ENCODE measurements at regions of chr3 and their contacts with region 1.

Region 1: DNA sequence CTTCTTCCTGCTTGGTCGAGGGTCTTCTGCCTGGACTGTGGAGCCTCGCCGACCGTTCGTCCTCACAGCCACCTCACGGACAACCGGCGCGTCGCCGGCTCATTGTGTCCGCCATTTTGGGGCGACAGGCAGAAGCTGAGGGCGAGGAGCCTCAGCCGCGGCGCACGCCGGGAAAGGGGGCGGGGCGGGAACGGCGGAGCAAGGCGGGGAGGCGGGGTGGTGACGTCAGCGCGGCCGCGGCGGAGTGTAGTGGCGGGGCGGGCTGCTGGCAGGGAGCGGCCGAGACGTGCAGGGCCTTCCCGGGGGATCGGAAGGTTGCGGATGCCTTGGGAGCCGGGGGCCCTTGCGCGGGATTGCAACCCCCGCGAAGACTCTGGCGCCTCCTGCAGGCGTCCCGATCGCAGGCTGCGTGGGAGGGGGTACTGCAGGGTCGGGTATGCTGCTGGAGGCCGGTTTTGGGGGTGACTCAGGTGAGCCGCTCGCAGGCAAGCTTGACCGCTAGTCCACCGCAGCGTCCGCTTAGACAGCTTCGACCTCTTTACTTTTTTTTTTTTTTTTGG is at the start of gene WDR82:
- DNase-seq: peak; percentile 98
- H3K4me3 Mint-ChIP-seq: peak within 1 kb of the TSS; percentile 96
- H3K27ac Mint-ChIP-seq: peak within 1 kb of the TSS; percentile 98
- H3K4me1 Mint-ChIP-seq: peaks cover 61% of the 10 kb centered on the region
- H3K27me3 Mint-ChIP-seq: no peaks in the 10 kb centered on the region
- total RNA-seq, gene WDR82: 131 TPM

Region 2: GRCh38 chr3:52231502-52232293 is 46.9 kb before region 1 on chr3:
- CTCF ChIA-PET with region 1: interaction called, 29 read pairs
- POLR2A ChIA-PET with region 1: interaction called, 1,001 read pairs
- DNase-seq: peak; percentile 87
- H3K4me3 Mint-ChIP-seq: no peak overlapping the region
- H3K27ac Mint-ChIP-seq: peak overlapping the region; percentile 63
- H3K4me1 Mint-ChIP-seq: peaks cover 45% of the 10 kb centered on the region
- H3K27me3 Mint-ChIP-seq: no peaks in the 10 kb centered on the region

Region 3: DNA sequence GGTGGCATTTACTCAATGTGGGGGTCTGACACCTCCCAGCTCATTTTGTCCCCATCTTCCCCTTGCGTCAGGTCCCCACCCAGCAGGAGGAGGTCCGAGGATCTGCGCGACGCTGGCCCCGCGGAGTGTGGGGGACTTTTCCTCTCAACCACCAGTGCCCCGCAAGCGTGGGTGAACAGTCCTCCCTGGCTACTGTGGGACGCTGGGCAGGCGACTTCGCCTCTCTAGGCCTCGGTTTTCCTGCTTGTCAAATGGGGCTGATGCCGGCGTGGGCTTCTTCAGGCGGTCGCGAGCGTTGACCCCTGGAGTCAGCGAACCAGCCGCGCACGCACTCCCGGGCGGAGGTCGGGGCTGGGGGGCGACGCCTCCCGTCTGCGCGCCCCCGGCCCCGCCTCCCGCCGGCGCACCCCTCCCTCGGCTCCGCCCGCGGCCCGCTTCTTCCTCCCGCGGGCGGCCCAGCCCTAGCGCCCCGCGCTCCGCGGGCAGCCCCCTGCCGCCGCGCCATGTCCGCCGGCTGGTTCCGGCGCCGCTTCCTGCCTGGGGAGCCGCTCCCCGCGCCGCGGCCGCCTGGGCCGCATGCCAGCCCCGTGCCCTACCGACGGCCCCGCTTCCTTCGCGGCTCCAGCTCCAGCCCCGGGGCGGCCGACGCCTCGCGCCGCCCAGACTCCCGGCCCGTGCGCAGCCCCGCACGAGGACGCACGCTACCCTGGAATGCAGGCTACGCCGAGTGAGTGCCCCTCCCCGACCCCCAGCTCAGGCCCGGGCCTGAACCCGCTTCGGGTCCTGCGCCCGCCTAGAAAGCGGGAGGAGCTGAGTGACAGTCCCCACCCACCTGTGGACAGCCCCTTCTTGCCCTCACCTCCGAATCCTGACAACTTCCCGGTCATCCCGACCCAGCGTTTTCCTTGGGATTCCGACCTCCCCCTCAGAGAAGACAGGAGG is 33.0 kb before region 1 on chr3 and contains the start of gene PPM1M:
- CTCF ChIA-PET with region 1: interaction called, 59 read pairs
- POLR2A ChIA-PET with region 1: interaction called, 1,001 read pairs
- DNase-seq: peak; percentile 69
- H3K4me3 Mint-ChIP-seq: peak within 1 kb of the TSS; percentile 89
- H3K27ac Mint-ChIP-seq: peak within 1 kb of the TSS; percentile 91
- H3K4me1 Mint-ChIP-seq: peaks cover 76% of the 10 kb centered on the region
- H3K27me3 Mint-ChIP-seq: no peaks in the 10 kb centered on the region
- total RNA-seq, gene PPM1M: 123 to 124 TPM

Region 4: DNA sequence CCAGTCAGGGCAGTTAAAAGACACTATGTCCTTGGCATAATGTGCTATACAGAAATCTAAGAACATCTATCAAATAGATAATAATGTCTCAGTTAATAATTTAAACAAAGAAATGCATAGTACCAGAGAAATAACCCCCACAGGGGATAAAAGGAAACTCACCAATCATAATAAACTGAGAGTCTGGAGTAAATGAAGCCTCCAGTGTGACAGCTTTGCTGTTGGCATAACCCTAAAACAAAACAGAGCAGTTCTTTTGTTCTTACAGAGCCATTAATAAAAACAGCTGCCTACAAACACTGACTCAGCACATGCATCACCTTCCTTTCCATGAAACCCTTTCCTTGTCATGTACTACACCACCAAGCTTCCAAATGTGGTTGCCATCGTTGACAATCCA is 19.6 kb before region 1 on chr3:
- CTCF ChIA-PET with region 1: interaction called, 53 read pairs
- POLR2A ChIA-PET with region 1: interaction called, 1,001 read pairs
- DNase-seq: no peak
- H3K4me3 Mint-ChIP-seq: no peak overlapping the region
- H3K27ac Mint-ChIP-seq: peak overlapping the region; percentile 62
- H3K4me1 Mint-ChIP-seq: peaks cover 95% of the 10 kb centered on the region
- H3K27me3 Mint-ChIP-seq: no peaks in the 10 kb centered on the region

Region 5: GRCh38 chr3:52302426-52303145 is 24.0 kb after region 1 on chr3:
- CTCF ChIA-PET with region 1: no interaction called
- POLR2A ChIA-PET with region 1: no interaction called
- DNase-seq: no peak
- H3K4me3 Mint-ChIP-seq: no peak overlapping the region
- H3K27ac Mint-ChIP-seq: no peak overlapping the region
- H3K4me1 Mint-ChIP-seq: no peaks in the 10 kb centered on the region
- H3K27me3 Mint-ChIP-seq: no peaks in the 10 kb centered on the region

Region 6: DNA sequence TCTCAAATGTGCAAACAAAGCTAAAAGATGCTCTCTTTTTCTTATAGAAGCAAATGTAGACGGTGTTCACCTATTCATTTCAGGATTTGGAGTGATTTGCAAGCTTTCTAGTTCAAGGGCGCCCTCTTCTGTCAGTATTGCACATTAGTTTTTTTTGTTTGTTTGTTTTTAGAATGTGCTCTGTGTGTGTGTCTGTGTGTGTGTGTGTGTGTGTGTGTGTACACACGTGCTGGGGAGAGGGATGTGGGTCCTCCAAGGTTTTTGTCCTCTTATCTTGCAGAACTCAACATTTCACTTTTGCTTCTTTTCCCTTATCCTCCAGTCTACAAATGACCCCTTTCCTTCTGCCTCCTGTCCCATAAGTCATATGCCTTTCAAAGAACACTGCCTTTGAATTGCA is 61.0 kb after region 1 on chr3:
- CTCF ChIA-PET with region 1: interaction called, 16 read pairs
- POLR2A ChIA-PET with region 1: interaction called, 3 read pairs
- DNase-seq: peak; percentile 49
- H3K4me3 Mint-ChIP-seq: no peak overlapping the region
- H3K27ac Mint-ChIP-seq: no peak overlapping the region
- H3K4me1 Mint-ChIP-seq: peaks cover 8% of the 10 kb centered on the region
- H3K27me3 Mint-ChIP-seq: no peaks in the 10 kb centered on the region

Measured in activated CD4-positive, alpha-beta memory T cell treated with anti-CD3 and anti-CD28 coated beads, Interleukin-2, amount 10 ng/mL, durations not matched to agents 7 days and 5 days (primary cell).